AG04449 (cell line): ENCODE measurements at regions of chrX and their contacts with region 1.

Region 1: GRCh38 chrX:53445977-53446376 is 11.8 kb upstream of the HSD17B10 start:
- DNase-seq: no peak
- H3K4me3 ChIP-seq: no peak overlapping the region
- CTCF ChIP-seq: peak; percentile 52

Region 2: DNA sequence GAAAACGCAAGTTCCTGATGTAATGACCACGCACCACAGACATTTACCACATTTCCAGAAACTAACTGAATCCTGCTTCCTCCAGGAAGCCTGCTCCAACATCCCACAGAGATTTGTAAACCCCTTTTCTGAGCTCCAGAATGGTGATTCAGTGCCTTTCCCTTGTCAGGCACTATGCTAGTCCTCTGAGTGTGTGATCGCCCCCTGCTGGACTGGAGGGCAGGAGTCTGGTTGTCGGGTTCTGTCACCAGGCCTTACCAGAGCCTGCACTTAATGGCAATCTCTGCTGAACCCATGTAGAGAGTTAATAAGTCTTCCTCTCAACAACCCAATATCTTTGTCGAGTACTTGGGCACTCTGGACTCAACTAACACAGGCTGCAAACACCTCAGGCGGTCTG is 206.5 kb before region 1 on chrX:
- CTCF ChIA-PET with region 1: no interaction called
- POLR2A ChIA-PET with region 1: no interaction called
- DNase-seq: no peak
- H3K4me3 ChIP-seq: no peak overlapping the region
- CTCF ChIP-seq: no peak

Region 3: GRCh38 chrX:53330331-53330730 is 115.6 kb before region 1 on chrX:
- CTCF ChIA-PET with region 1: interaction called, 11 read pairs
- POLR2A ChIA-PET with region 1: no interaction called
- DNase-seq: no peak
- H3K4me3 ChIP-seq: no peak overlapping the region
- CTCF ChIP-seq: no peak

Region 4: DNA sequence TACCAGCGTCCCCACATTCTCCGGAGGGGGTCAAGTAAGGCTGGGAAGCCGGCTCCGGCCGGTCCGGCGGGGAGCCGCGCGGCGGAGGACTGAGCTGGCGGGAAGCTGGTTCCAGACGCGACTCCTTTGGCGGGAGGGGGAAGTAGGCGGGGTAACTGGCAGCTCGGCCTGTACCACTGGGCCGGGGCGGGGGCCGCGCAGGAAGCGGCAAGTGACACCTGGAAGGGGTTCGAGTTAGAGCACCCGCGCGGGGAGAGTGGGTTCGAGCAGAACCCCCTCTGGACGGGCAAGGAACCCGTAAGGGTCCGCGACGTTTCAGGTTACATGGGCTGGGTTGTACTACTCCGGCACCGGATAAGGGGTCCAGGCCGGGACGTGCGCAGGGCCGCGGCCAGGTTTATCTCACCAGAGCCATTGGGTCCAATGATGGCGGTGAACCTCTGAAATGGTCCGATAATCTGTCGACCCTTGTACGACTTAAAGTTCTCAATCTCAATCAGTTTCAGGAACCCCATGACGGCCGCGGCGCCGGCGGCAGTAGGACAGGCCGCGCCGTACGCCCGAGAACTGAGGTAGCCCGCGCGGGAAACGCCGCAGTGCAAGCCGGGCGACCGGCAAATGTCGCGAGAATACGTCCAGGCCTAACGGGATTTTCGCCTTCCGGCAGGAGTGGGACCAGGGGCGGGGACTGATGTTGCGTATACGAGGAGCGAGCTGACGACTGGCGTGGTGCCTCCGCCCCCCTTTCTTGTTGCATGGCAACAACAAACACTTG is 23.7 kb before region 1 on chrX and contains the start of gene SMC1A:
- CTCF ChIA-PET with region 1: interaction called, 10 read pairs
- POLR2A ChIA-PET with region 1: interaction called, 3 read pairs
- DNase-seq: peak; percentile 79
- H3K4me3 ChIP-seq: peak within 1 kb of the TSS; percentile 71
- CTCF ChIP-seq: no peak

Region 5: GRCh38 chrX:53458082-53458481 is 12.1 kb after region 1 on chrX:
- CTCF ChIA-PET with region 1: interaction called, 11 read pairs
- POLR2A ChIA-PET with region 1: no interaction called
- DNase-seq: no peak
- H3K4me3 ChIP-seq: no peak overlapping the region
- CTCF ChIP-seq: no peak